Endothelial cell of umbilical vein (primary cell): ENCODE measurements at regions of chr3 and their contacts with region 1.

Region 1: GRCh38 chr3:114624571-114625181 is 330.8 kb downstream of the TIGIT start:
- DNase-seq: peak; percentile 97
- H3K4me3 ChIP-seq: peak overlapping the region; percentile 21 to 88 (median 50)
- H3K27ac ChIP-seq: peak overlapping the region; percentile 99
- H3K4me1 ChIP-seq: peaks cover 36% of the 10 kb centered on the region
- H3K27me3 ChIP-seq: no peaks in the 10 kb centered on the region
- CTCF ChIP-seq: no peak
- POLR2A ChIP-seq: no peak

Region 2: DNA sequence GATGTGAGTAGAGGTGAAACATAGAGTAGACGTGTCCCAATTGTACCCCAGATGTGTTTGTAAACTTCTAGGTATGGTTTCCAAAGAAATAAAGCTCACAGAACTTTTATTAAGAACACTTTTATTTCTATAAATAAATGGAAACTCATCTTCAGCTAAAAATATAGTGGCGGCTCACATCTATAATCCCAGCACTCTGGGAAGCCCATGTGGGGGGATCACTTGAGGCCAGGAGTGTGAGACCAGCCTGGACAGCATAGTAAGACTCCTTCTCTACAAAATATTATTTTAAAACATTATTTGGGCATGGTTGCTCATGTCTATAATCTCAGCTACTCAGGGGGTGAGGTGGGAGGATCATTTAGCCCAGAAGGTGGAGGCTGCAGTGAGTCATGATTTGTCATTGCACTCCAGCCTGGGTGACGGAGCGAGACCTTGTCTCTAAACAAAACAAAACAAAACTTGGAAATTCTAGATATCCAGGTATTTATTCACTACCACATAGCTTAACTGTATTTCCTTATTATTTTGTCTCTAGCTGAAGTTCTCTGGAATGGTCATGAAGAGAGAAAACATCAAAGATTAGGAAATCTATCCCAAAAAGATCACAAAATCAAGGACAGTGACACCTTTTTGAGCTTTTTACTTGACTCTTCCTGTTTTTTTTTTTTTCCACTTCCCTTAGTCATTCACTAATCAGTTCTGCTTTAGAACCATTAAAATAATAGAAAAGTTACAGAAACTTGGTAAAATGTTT is 72.7 kb before region 1 on chr3:
- CTCF ChIA-PET with region 1: interaction called, 3 read pairs
- POLR2A ChIA-PET with region 1: no interaction called
- dilution Hi-C with region 1: no loop called
- intact Hi-C with region 1: loop called (anchors 5 kb)
- DNase-seq: peak; percentile 46
- H3K4me3 ChIP-seq: no peak overlapping the region
- H3K27ac ChIP-seq: peak overlapping the region; percentile 33
- H3K4me1 ChIP-seq: peaks cover 21% of the 10 kb centered on the region
- H3K27me3 ChIP-seq: no peaks in the 10 kb centered on the region
- CTCF ChIP-seq: no peak
- POLR2A ChIP-seq: no peak

Region 3: DNA sequence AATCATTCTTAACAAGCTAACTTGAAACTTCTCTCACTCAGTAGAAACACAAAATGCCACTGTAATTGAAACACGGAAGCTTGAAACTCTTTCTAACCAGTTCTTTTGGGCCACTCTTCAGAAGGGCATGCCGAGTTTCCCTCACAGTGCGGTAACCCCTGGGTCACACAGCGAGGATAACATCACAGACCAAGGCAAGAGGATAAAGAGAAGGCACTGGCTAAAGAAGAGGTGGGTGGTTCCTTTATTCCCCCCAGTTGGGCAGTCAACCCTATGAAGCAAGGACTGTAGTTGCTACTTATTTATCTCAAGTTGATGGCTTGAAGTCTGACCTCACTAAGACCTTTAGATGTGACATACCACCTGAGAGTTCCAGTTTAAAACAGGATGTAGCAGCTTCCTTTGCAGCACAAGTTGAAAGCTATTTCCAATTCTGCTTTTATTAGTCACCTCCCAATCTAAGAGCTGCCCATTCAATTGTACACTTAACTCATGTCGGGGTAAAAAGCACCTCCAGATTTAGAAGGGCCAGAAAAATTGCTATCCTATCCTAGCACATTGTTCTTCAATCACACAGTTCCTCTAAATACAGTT is 58.4 kb before region 1 on chr3:
- CTCF ChIA-PET with region 1: no interaction called
- POLR2A ChIA-PET with region 1: interaction called, 6 read pairs
- dilution Hi-C with region 1: no loop called
- intact Hi-C with region 1: loop called (anchors 5 kb)
- DNase-seq: peak; percentile 48
- H3K4me3 ChIP-seq: no peak overlapping the region
- H3K27ac ChIP-seq: peak overlapping the region; percentile 20
- H3K4me1 ChIP-seq: peaks cover 24% of the 10 kb centered on the region
- H3K27me3 ChIP-seq: no peaks in the 10 kb centered on the region
- CTCF ChIP-seq: no peak
- POLR2A ChIP-seq: no peak

Region 4: GRCh38 chr3:114649331-114649730 is 24.7 kb after region 1 on chr3:
- CTCF ChIA-PET with region 1: interaction called, 4 read pairs
- POLR2A ChIA-PET with region 1: no interaction called
- dilution Hi-C with region 1: no loop called
- intact Hi-C with region 1: loop called (anchors 1 kb)
- DNase-seq: peak; percentile 28
- H3K4me3 ChIP-seq: no peak overlapping the region
- H3K27ac ChIP-seq: peak overlapping the region; percentile 55
- H3K4me1 ChIP-seq: peaks cover 24% of the 10 kb centered on the region
- H3K27me3 ChIP-seq: no peaks in the 10 kb centered on the region
- CTCF ChIP-seq: no peak
- POLR2A ChIP-seq: no peak